ENCODE measurements at regions of chr9 and their contacts with region 1.

Region 1: DNA sequence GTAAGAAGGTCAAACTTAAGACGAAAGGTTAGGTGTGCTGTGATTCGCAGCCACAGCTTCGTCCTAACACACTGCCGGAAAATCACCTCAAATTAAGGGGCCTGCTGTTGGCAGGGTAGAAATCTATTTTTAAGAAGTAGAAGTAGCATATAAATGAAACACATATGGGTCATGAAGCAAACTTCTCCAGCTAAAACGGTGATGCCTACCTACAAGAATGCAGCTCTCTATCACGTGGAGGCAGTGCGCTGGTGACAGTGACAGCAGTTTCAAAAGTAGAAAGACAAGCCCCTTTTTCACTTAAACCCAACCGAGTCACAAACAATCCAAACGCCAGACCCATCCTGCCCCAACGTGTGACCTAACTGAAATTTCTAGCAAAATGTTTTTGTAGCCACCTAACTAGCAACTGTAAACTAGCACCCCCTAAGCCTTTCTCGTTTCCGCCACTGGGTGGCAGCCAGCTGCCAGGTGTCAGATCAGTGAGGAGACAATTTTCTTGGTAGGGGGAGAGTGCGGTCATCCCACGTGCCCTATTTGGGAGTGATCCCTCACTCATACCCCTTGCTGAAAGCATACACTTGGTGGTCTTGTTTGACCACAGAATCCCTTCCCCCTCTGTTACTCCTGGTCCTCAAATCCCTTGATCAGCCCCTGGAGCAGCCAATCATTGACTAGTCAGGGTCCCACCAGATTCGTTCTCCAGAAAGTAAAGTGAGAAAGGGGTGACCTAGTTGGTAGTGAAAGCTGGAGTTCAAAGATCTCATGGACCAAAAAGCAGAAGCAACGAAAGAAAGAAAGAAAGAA is 71.8 kb upstream of the MAMDC2 start:
- DNase-seq: peak; percentile 72
- H3K4me3 ChIP-seq: no peak overlapping the region
- H3K27ac ChIP-seq: no peak overlapping the region
- H3K4me1 ChIP-seq: no peaks in the 10 kb centered on the region
- H3K27me3 ChIP-seq: no peaks in the 10 kb centered on the region
- CTCF ChIP-seq: peak; percentile 69

Region 2: GRCh38 chr9:70043689-70044489 is 72.0 kb after region 1 on chr9 and contains the start of gene MAMDC2:
- intact Hi-C with region 1: no loop called
- DNase-seq: peak; percentile 32
- H3K4me3 ChIP-seq: peak within 1 kb of the TSS; percentile 47
- H3K27ac ChIP-seq: peak within 1 kb of the TSS; percentile 70
- H3K4me1 ChIP-seq: no peaks in the 10 kb centered on the region
- H3K27me3 ChIP-seq: peaks cover 13% of the 10 kb centered on the region
- CTCF ChIP-seq: no peak
- total RNA-seq, gene MAMDC2: 2.3 to 7.0 TPM

Region 3: DNA sequence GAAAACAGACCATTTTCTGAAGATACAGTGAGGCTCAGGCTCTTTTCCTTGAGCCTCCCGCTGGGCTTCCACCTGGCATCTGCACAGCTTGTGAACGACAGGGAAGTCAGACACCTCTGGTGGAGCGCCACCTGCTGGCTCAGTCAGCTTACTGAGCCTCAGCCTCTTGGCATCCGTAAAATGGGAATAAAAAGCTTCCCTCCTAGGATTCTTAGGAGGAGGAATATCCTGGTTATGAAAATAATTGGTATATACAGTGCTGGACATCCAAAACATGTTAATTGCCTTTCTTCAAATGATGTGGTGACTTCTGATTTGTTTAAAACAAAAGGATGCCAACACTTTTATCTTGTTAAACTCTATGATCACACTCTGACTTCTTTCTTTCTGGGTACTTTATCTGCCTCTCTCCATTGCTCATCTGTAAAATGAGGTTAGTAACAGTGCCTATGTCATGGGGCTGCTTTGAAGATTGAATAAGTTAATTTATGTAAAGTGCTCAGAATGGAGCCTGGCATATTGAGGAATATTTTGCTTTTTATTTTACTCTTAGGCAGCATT is 139.3 kb after region 1 on chr9:
- intact Hi-C with region 1: loop called (anchors 2 kb)
- DNase-seq: peak; percentile 77
- H3K4me3 ChIP-seq: no peak overlapping the region
- H3K27ac ChIP-seq: no peak overlapping the region
- H3K4me1 ChIP-seq: no peaks in the 10 kb centered on the region
- H3K27me3 ChIP-seq: no peaks in the 10 kb centered on the region
- CTCF ChIP-seq: peak; percentile 86

Region 4: DNA sequence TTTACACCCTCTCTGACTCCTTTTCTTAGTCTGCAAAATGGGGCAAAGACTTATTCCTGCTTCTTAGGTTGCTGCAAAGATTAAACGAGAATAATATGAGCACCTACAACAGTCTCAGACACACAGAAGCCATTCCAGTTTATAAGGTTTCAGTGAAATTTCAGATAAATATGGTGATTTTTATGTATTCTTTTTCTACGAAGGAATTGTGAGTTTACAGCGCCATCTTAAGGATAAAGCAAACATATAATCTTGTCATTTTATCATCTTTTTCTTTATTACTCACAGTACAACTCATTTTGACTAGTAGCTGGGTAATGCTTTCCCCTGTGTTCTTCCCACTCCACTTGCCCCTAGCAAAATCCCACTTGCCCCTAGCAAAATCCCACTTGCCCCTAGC is 257.7 kb after region 1 on chr9:
- intact Hi-C with region 1: loop called (anchors 5 kb)
- DNase-seq: no peak
- H3K4me3 ChIP-seq: no peak overlapping the region
- H3K27ac ChIP-seq: no peak overlapping the region
- H3K4me1 ChIP-seq: no peaks in the 10 kb centered on the region
- H3K27me3 ChIP-seq: no peaks in the 10 kb centered on the region
- CTCF ChIP-seq: no peak

Measured in colonic mucosa (tissue), 4 donors.